Lower lobe of right lung (tissue), 2 donors: ENCODE measurements at regions of chr19 and their contacts with region 1.

Region 1: DNA sequence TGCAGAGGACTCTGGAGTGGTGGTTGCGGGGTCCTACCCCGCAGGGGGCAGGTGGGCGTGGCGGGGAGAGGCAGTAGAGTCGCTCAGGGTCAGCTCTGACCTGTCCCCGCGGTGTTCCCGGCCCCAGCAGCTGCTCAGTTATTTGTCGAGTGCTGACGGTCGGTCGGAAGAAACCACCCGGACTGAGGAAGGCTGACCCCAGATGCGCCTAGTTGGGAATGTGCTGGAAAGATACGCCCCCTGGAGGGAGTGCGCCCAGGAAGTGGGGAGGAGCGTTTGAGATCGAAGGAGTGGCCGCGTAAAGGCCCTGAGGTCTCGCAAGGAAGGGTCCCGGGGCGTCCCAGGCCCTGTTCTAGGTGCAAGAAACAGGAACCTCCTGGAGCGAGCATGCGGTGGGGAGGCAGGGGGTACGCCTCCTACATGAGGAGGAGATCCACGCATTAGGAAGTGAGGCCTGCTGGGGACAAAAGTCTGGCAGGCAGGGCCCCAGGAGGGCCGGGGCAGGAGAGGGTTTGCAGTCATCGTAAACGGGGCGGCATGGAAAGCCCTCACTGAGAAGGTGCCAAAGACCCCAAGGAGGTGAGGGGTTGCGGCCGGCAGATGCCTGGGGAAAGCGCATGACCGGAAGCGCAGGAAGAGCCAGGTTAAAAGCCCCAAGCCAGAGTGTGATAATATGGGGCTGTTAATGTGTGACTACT is 9.2 kb downstream of the CCDC8 start:
- DNase-seq: peak; percentile 59
- ATAC-seq: peak; percentile 58 to 60
- H3K4me3 ChIP-seq: peak overlapping the region; percentile 54
- H3K27ac ChIP-seq: peak overlapping the region; percentile 38
- H3K4me1 ChIP-seq: peaks cover 22% of the 10 kb centered on the region
- H3K27me3 ChIP-seq: peaks cover 61% of the 10 kb centered on the region
- CTCF ChIP-seq: peak; percentile 31

Region 2: DNA sequence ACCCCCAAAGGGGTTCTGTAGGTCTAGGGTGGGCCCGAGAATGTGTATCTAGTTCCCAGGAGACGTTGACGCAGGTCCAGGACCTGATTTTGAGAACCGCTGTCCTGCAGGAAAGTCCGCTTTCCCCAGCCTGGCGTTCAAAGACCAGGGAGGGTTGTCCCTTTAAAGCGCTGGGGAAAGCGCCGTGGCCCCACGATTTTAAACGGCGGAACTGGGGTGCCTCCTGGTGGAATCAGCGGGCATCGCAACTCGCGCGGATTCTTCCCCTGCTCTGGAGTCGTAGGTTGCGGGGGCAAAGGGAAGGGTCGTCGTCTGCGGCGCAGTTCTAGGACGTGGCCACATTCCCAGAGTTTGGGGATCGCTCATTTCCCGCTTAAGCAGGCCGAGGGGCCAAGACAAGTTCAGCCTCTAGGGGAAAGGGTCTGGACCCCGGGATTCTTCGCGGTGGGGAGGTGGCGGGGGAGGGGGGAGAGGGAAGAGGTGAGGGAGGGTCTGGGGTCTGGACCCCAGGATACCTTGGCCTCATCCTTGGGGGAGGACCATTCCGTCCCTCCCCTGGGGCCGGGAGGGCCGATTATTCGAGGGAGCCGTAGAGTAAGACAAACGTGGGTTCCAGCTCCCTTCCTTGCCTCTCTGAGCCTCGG is 83.7 kb after region 1 on chr19:
- intact Hi-C with region 1: loop called (anchors 10 kb)
- DNase-seq: peak; percentile 78
- ATAC-seq: peak; percentile 74 to 81
- H3K4me3 ChIP-seq: peak overlapping the region; percentile 41
- H3K27ac ChIP-seq: no peak overlapping the region
- H3K4me1 ChIP-seq: peaks cover 23% of the 10 kb centered on the region
- H3K27me3 ChIP-seq: peaks cover 55% of the 10 kb centered on the region
- CTCF ChIP-seq: peak; percentile 92